ENCODE measurements at regions of chr1 and their contacts with region 1.

Region 1: GRCh38 chr1:156583821-156584622 is 4.5 kb downstream of the TTC24 start:
- DNase-seq: peak; percentile 88
- ATAC-seq: peak; percentile 60
- H3K4me3 ChIP-seq: peak overlapping the region in 1 of 5 experiments; percentile 64
- H3K4me3 Mint-ChIP-seq: peak overlapping the region; percentile 15
- H3K27ac ChIP-seq: peak overlapping the region; percentile 88 to 94
- H3K27ac Mint-ChIP-seq: peak overlapping the region; percentile 76
- H3K4me1 ChIP-seq: peaks cover 26 to 36% of the 10 kb centered on the region in 2 donors
- H3K4me1 Mint-ChIP-seq: peaks cover 32% of the 10 kb centered on the region
- H3K27me3 ChIP-seq: no peaks in the 10 kb centered on the region
- H3K27me3 Mint-ChIP-seq: no peaks in the 10 kb centered on the region
- CTCF ChIP-seq: peak; percentile 94

Region 2: DNA sequence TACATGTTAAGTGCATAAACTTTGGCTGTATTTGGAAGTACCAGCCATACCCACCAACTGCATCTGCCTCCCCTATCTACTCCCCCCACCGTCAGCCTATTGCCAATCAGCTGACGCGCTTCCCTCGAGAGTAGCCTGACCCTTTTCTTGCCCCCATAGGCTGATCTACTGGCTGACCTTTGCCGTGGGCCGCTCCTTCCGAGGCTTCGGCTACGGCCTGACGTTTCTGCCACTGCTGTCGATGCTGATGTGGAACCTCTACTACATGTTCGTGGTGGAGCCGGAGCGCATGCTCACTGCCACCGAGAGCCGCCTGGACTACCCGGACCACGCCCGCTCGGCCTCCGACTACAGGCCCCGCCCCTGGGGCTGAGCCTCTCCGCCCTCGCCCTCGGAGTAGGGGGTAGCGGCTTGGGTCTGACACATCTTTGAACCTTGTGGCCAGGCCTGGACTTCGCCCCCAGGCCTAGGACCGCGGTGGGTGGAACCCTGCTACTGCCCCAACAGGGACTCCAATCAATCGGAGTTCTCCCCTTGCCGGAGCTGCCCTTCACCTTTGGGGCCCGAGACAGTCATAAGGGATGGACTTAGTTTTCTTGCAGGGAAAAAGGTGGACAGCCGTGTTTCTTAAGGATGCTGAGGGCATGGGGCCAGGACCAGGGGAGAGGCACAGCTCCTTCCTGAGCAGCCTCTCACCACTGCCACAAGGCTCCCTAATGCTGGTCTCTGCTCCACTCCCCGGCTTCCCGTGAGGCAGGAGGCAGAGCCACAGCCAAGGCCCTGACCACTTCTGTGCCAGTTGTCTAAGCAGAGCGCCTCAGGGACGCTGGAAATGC is 292.6 kb before region 1 on chr1:
- CTCF ChIA-PET with region 1: no interaction called
- POLR2A ChIA-PET with region 1: no interaction called
- intact Hi-C with region 1: loop called (anchors 5 kb)
- DNase-seq: peak; percentile 61
- ATAC-seq: peak; percentile 83
- H3K4me3 ChIP-seq: peak overlapping the region in 2 of 5 experiments; percentile 30 to 34
- H3K4me3 Mint-ChIP-seq: peak overlapping the region; percentile 85
- H3K27ac ChIP-seq: peak overlapping the region in 1 of 2 donors; percentile 25
- H3K27ac Mint-ChIP-seq: peak overlapping the region; percentile 84
- H3K4me1 ChIP-seq: peaks cover 12 to 20% of the 10 kb centered on the region in 2 donors
- H3K4me1 Mint-ChIP-seq: peaks cover 20% of the 10 kb centered on the region
- H3K27me3 ChIP-seq: peaks cover 0 to 2% (median 0%) of the 10 kb centered on the region in 4 experiments
- H3K27me3 Mint-ChIP-seq: no peaks in the 10 kb centered on the region
- CTCF ChIP-seq: no peak

Region 3: DNA sequence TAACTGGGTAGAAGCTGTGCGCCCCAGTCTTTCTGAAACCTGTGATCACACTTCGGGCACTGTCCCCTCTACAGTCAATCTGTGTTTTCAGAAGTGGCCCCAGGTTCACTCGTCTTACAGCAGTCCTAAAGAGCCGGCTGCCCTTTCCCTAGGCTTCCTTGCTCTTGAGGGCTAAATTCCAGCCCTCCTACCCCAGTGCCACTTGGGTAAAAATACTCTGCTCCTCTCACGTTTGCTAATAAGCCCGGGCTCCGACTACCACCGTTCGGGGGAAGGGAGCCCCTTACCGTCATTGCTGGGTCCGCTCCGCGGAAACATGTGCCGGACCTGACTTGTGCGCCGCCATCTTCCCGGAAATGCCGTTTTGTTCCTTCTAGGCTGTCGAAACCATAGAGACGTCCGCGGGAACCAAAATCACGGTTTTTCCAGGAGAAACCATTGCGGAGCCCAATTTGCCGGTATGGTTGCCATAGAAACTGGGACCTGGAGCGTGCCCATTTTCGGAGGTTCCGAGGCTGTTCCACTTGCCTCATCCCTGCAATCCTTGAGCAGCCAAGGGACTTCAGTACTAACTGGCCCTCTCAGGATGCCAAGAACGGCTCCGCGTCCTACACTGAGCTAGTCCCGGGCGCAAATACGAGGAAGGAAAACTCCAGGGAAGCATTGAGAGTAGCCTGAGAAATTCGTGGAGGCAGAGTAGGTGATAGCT is 17.3 kb after region 1 on chr1 and contains the start of gene GPATCH4:
- CTCF ChIA-PET with region 1: interaction called, 15 read pairs
- POLR2A ChIA-PET with region 1: interaction called, 6 read pairs
- intact Hi-C with region 1: no loop called
- DNase-seq: peak; percentile 84
- ATAC-seq: peak; percentile 74
- H3K4me3 ChIP-seq: peak within 1 kb of the TSS; percentile 85 to 100 (median 99)
- H3K4me3 Mint-ChIP-seq: peak within 1 kb of the TSS; percentile 97
- H3K27ac ChIP-seq: peak within 1 kb of the TSS; percentile 72 to 83
- H3K27ac Mint-ChIP-seq: peak within 1 kb of the TSS; percentile 96
- H3K4me1 ChIP-seq: peaks cover 22 to 30% of the 10 kb centered on the region in 2 donors
- H3K4me1 Mint-ChIP-seq: peaks cover 38% of the 10 kb centered on the region
- H3K27me3 ChIP-seq: no peaks in the 10 kb centered on the region
- H3K27me3 Mint-ChIP-seq: no peaks in the 10 kb centered on the region
- CTCF ChIP-seq: no peak
- total RNA-seq, gene GPATCH4: 31.4 and 38.3 TPM in 2 replicates

Region 4: DNA sequence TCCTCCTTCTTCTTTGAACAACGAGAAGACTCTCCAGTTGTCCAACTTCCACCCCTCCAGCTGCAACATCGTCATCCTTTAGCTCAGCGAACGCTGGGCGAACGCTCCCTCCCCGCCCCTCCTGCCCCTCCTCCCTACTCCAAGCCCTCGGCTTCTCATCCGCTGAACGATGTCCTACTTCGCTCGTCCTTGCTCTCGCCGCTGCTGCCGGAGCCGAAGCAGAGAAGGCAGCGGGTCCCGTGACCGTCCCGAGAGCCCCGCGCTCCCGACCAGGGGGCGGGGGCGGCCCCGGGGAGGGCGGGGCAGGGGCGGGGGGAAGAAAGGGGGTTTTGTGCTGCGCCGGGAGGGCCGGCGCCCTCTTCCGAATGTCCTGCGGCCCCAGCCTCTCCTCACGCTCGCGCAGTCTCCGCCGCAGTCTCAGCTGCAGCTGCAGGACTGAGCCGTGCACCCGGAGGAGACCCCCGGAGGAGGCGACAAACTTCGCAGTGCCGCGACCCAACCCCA is 57.8 kb after region 1 on chr1 and contains the start of gene BCAN:
- CTCF ChIA-PET with region 1: no interaction called
- POLR2A ChIA-PET with region 1: interaction called, 15 read pairs
- intact Hi-C with region 1: no loop called
- DNase-seq: peak; percentile 55
- ATAC-seq: peak; percentile 48
- H3K4me3 ChIP-seq: peak within 1 kb of the TSS in 4 of 5 experiments; percentile 2 to 50 (median 26)
- H3K4me3 Mint-ChIP-seq: peak within 1 kb of the TSS; percentile 80
- H3K27ac ChIP-seq: no peak within 1 kb of the TSS
- H3K27ac Mint-ChIP-seq: no peak within 1 kb of the TSS
- H3K4me1 ChIP-seq: peaks cover 24 to 28% of the 10 kb centered on the region in 2 donors
- H3K4me1 Mint-ChIP-seq: peaks cover 23% of the 10 kb centered on the region
- H3K27me3 ChIP-seq: peaks cover 0 to 80% (median 55%) of the 10 kb centered on the region in 4 experiments
- H3K27me3 Mint-ChIP-seq: peaks cover 79% of the 10 kb centered on the region
- CTCF ChIP-seq: no peak
- total RNA-seq, gene BCAN: not detected in 2 replicates

Region 5: DNA sequence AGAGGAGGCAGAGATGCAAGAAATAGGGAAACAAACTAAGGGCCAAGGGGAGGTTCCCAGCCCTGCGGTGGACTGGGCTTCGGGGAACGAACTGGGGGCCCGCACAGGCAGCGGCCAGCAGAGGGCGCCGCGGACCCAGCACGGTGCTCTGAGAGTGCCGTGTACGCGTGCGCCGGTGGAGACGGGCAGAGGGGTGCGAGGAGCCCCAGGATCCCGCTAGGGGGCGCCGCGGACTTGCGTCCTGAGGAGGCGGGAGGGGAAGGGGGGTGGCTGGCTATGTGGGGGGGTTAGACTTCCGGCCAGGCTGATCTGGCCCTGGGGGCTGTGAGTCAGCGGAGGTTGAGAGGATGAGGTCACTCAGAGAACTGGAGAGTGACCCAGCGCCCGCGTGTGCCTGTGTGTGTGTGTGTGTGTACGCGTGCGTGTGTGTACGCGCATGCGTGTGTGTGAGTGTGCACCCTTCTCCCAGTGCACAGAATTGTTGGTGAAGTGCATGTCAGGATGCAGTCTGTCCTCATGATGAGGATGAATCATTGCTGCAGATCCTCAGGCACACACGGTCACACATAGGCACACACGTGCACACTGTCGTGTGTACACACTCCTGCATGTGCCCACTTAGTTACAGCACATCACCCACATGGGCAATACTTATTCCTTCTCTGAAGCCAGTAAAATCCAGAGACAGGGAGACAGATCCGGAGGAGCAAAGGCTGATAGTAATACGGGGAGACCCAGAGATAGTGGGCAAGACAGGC is 76.2 kb after region 1 on chr1:
- CTCF ChIA-PET with region 1: interaction called, 5 read pairs
- POLR2A ChIA-PET with region 1: no interaction called
- intact Hi-C with region 1: loop called (anchors 1 kb)
- DNase-seq: peak; percentile 92
- ATAC-seq: peak; percentile 83
- H3K4me3 ChIP-seq: no peak overlapping the region
- H3K4me3 Mint-ChIP-seq: peak overlapping the region; percentile 66
- H3K27ac ChIP-seq: no peak overlapping the region
- H3K27ac Mint-ChIP-seq: peak overlapping the region; percentile 69
- H3K4me1 ChIP-seq: peaks cover 78 to 89% of the 10 kb centered on the region in 2 donors
- H3K4me1 Mint-ChIP-seq: peaks cover 91% of the 10 kb centered on the region
- H3K27me3 ChIP-seq: peaks cover 0 to 30% (median 11%) of the 10 kb centered on the region in 4 experiments
- H3K27me3 Mint-ChIP-seq: peaks cover 25% of the 10 kb centered on the region
- CTCF ChIP-seq: peak; percentile 99

Measured in B cell (primary cell).